ENCODE measurements at regions of chr10 and their contacts with region 1.

Region 1: DNA sequence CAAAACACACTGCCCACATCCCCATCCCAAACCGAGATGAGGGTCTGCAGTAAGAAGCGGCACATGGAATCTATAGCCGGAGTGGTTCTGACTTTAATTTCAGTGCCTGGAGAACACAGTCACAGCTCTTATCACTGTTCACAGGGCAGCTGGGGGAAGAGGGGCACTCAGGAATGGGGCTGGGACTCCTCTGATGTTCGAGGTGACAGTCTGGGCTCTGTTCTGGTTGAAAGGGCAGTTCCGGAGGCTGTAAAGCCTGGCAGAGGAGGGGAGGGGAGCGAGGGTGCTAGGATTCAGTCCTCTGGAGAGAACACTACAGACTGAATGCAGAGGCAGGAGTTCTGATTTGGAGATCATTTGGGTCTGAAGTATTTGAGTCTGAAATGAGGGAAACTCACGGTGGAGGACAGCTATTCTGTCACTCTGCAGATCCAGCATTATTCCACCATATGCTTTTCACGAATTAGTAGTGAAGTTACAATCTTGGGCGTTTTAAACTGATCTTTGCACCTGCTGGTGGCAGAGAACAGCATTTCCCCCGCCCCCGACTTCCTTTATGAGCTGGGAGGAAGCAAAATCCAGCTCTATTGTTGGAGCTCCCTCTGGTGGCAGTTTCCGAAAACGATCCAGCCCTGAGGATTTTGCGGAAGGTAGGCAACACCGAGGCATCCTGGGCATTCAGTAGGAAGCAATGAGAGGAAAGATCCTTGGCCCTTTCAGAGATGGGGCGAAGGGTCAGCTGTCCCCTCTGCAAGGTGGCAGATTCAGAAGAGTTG is 22.7 kb upstream of the KCNK18 start:
- DNase-seq: peak; percentile 32
- H3K4me3 ChIP-seq: peak overlapping the region; percentile 50
- H3K27ac ChIP-seq: no peak overlapping the region
- H3K27me3 ChIP-seq: peaks cover 30% of the 10 kb centered on the region
- CTCF ChIP-seq: peak; percentile 88

Region 2: GRCh38 chr10:116787893-116788665 is 386.5 kb before region 1 on chr10:
- CTCF ChIA-PET with region 1: interaction called, 65 read pairs
- POLR2A ChIA-PET with region 1: no interaction called
- DNase-seq: peak; percentile 27
- H3K4me3 ChIP-seq: peak overlapping the region; percentile 48
- H3K27ac ChIP-seq: no peak overlapping the region
- H3K27me3 ChIP-seq: peaks cover 3% of the 10 kb centered on the region
- CTCF ChIP-seq: peak; percentile 99

Region 3: GRCh38 chr10:116808706-116809235 is 365.9 kb before region 1 on chr10:
- CTCF ChIA-PET with region 1: interaction called, 15 read pairs
- POLR2A ChIA-PET with region 1: no interaction called
- DNase-seq: no peak
- H3K4me3 ChIP-seq: no peak overlapping the region
- H3K27ac ChIP-seq: no peak overlapping the region
- H3K27me3 ChIP-seq: peaks cover 20% of the 10 kb centered on the region
- CTCF ChIP-seq: no peak

Region 4: DNA sequence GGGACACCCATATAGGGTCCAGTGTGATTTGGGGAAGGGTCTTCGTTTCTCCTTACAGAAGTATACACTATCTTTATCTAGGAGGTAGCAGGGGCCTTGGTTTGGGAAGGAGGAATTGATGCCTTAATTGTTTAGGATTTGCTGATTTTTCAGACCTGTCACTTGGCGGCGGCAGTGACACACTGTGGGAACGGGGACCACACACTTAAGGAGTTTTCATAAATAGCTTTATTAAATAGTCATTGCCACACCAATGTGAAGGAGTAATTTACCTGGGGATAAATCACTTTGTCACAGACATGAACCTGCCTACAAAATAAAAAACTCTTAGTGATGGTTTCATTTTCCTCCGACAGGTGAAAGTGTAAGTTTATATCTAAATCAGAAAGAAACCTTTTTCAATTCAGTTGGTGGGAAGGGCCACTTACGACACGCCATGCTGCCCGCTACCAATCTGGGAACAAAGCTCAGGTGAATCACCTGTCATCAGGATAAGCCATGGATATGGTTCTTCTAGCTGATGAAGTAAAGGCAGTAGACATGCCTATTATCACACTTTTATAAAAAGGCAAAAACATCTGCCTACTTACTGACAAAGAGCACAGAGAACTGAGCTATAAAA is 337.6 kb before region 1 on chr10:
- CTCF ChIA-PET with region 1: interaction called, 16 read pairs
- POLR2A ChIA-PET with region 1: no interaction called
- DNase-seq: no peak
- H3K4me3 ChIP-seq: no peak overlapping the region
- H3K27ac ChIP-seq: no peak overlapping the region
- H3K27me3 ChIP-seq: peaks cover 24% of the 10 kb centered on the region
- CTCF ChIP-seq: peak; percentile 38

Region 5: GRCh38 chr10:117139581-117140524 is 34.8 kb before region 1 on chr10:
- CTCF ChIA-PET with region 1: interaction called, 15 read pairs
- POLR2A ChIA-PET with region 1: no interaction called
- DNase-seq: no peak
- H3K4me3 ChIP-seq: no peak overlapping the region
- H3K27ac ChIP-seq: no peak overlapping the region
- H3K27me3 ChIP-seq: peaks cover 69% of the 10 kb centered on the region
- CTCF ChIP-seq: no peak

Region 6: GRCh38 chr10:117216611-117217195 is 42.1 kb after region 1 on chr10:
- CTCF ChIA-PET with region 1: interaction called, 11 read pairs
- POLR2A ChIA-PET with region 1: no interaction called
- DNase-seq: peak; percentile 29
- H3K4me3 ChIP-seq: peak overlapping the region; percentile 67
- H3K27ac ChIP-seq: no peak overlapping the region
- H3K27me3 ChIP-seq: peaks cover 10% of the 10 kb centered on the region
- CTCF ChIP-seq: peak; percentile 100